A549 (cell line): ENCODE measurements at regions of chr3 and their contacts with region 1.

Region 1: GRCh38 chr3:187738331-187739093 is 6.8 kb downstream of the BCL6 start:
- DNase-seq: peak; percentile 85 to 87
- ATAC-seq: peak; percentile 65 to 68
- H3K4me3 ChIP-seq: peak overlapping the region; percentile 60
- H3K27ac ChIP-seq: peak overlapping the region; percentile 68 to 84
- H3K4me1 ChIP-seq: peaks cover 38% of the 10 kb centered on the region
- CTCF ChIP-seq: peak; percentile 71
- EP300 ChIP-seq: no peak
- POLR2A ChIP-seq: peak; percentile 24; the same call in 1 of the 2 replicates
- RAD21 ChIP-seq: peak; percentile 86 to 87

Region 2: GRCh38 chr3:187669675-187670504 is 68.6 kb before region 1 on chr3 and contains the start of gene SST:
- CTCF ChIA-PET with region 1: no interaction called
- POLR2A ChIA-PET with region 1: no interaction called
- DNase-seq: peak in 1 of 2 experiments; percentile 13
- ATAC-seq: 0 out of 6 replicates have a peak, but pooled peaks of 1 of the 2 experiments have one; percentile 59
- H3K4me3 ChIP-seq: no peak within 1 kb of the TSS
- H3K27ac ChIP-seq: no peak within 1 kb of the TSS
- H3K4me1 ChIP-seq: no peaks in the 10 kb centered on the region
- CTCF ChIP-seq: no peak
- EP300 ChIP-seq: no peak
- POLR2A ChIP-seq: no peak
- RAD21 ChIP-seq: no peak
- polyA plus RNA-seq, gene SST: not detected in 2 replicates

Region 3: GRCh38 chr3:187777331-187777941 is 38.9 kb after region 1 on chr3:
- CTCF ChIA-PET with region 1: no interaction called
- POLR2A ChIA-PET with region 1: no interaction called
- DNase-seq: no peak
- ATAC-seq: no peak
- H3K4me3 ChIP-seq: no peak overlapping the region
- H3K27ac ChIP-seq: no peak overlapping the region
- H3K4me1 ChIP-seq: no peaks in the 10 kb centered on the region
- CTCF ChIP-seq: no peak
- EP300 ChIP-seq: no peak
- POLR2A ChIP-seq: no peak
- RAD21 ChIP-seq: no peak

Region 4: GRCh38 chr3:188262913-188263683 is 524.6 kb after region 1 on chr3:
- CTCF ChIA-PET with region 1: interaction called, 43 read pairs
- POLR2A ChIA-PET with region 1: no interaction called
- DNase-seq: peak in 1 of 2 experiments; percentile 89
- ATAC-seq: peak; percentile 81 to 84
- H3K4me3 ChIP-seq: no peak overlapping the region
- H3K27ac ChIP-seq: peak overlapping the region; percentile 82 to 84
- H3K4me1 ChIP-seq: peaks cover 90% of the 10 kb centered on the region
- CTCF ChIP-seq: no peak
- EP300 ChIP-seq: peak; percentile 63 to 74; a peak in 2 of 5 replicates
- POLR2A ChIP-seq: no peak
- RAD21 ChIP-seq: peak in 1 of 2 experiments; percentile 41; a peak in 3 of 5 replicates

Region 5: DNA sequence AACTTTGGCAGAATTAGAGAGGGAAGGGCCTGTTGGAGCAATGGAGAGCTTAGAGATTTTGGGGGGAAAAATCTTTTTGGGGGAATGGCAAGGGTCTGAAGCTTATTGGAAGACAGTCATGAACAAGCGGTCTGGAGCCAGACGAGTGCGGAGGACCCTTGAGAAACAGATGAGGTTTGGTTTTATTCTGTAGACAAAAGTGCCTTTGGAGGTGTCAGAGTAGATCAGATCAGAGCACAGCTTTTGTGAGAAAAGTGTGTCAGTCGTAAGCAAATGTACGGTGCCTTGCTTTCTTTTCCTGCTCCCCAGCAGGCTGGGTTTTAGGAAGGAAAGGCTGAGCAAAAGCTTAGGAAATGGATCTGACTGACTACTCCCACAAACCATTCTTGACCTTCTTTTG is 1196.5 kb after region 1 on chr3:
- CTCF ChIA-PET with region 1: interaction called, 12 read pairs
- POLR2A ChIA-PET with region 1: no interaction called
- DNase-seq: no peak
- ATAC-seq: no peak
- H3K4me3 ChIP-seq: no peak overlapping the region
- H3K27ac ChIP-seq: no peak overlapping the region
- H3K4me1 ChIP-seq: no peaks in the 10 kb centered on the region
- CTCF ChIP-seq: no peak
- EP300 ChIP-seq: no peak
- POLR2A ChIP-seq: no peak
- RAD21 ChIP-seq: no peak

Region 6: GRCh38 chr3:188954590-188955208 is 1216.2 kb after region 1 on chr3:
- CTCF ChIA-PET with region 1: interaction called, 221 read pairs
- POLR2A ChIA-PET with region 1: interaction called, 8 read pairs
- DNase-seq: peak; percentile 58 to 84
- ATAC-seq: peak; percentile 72 to 83
- H3K4me3 ChIP-seq: no peak overlapping the region
- H3K27ac ChIP-seq: peak overlapping the region; percentile 18 to 35; a peak in 2 of 6 replicates
- H3K4me1 ChIP-seq: peaks cover 28% of the 10 kb centered on the region
- CTCF ChIP-seq: peak; percentile 85
- EP300 ChIP-seq: no peak
- POLR2A ChIP-seq: no peak
- RAD21 ChIP-seq: peak; percentile 96 to 99

Region 7: DNA sequence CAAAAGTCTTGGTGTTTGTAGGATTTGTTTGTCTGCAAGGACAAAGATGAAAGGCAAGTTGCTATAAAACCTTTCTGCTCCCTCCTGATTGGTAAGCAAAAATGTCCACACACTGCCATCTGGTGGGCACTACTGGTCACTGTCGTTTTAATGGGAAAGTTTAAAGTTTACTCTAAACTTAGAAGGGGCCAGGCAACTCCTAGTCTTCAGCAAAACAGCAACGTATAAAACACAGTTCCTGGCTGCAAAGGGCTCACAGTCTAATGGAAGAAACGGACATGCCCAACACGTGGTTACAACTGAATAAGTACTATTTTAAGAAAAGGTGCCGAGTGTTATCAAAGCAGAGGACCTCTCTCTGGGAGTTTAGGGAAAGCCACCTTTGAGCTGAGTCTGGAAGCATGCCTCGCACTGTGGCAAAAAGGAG is 1409.6 kb after region 1 on chr3:
- CTCF ChIA-PET with region 1: interaction called, 40 read pairs
- POLR2A ChIA-PET with region 1: no interaction called
- DNase-seq: peak; percentile 26 to 53
- ATAC-seq: peak; percentile 76 to 87; a peak in 5 of 6 replicates
- H3K4me3 ChIP-seq: no peak overlapping the region
- H3K27ac ChIP-seq: no peak overlapping the region; a peak in 1 of 6 replicates
- H3K4me1 ChIP-seq: peaks cover 6% of the 10 kb centered on the region; the same call in 1 of the 3 replicates
- CTCF ChIP-seq: peak; percentile 73
- EP300 ChIP-seq: no peak
- POLR2A ChIP-seq: no peak
- RAD21 ChIP-seq: peak; percentile 73 to 83